Activated CD4-positive, alpha-beta T cell treated with anti-CD3 and anti-CD28 coated beads, Interleukin-2, amount 10 ng/mL, durations not matched to agents 24 days and 14 days (primary cell): ENCODE measurements at regions of chr3 and their contacts with region 1.

Region 1: DNA sequence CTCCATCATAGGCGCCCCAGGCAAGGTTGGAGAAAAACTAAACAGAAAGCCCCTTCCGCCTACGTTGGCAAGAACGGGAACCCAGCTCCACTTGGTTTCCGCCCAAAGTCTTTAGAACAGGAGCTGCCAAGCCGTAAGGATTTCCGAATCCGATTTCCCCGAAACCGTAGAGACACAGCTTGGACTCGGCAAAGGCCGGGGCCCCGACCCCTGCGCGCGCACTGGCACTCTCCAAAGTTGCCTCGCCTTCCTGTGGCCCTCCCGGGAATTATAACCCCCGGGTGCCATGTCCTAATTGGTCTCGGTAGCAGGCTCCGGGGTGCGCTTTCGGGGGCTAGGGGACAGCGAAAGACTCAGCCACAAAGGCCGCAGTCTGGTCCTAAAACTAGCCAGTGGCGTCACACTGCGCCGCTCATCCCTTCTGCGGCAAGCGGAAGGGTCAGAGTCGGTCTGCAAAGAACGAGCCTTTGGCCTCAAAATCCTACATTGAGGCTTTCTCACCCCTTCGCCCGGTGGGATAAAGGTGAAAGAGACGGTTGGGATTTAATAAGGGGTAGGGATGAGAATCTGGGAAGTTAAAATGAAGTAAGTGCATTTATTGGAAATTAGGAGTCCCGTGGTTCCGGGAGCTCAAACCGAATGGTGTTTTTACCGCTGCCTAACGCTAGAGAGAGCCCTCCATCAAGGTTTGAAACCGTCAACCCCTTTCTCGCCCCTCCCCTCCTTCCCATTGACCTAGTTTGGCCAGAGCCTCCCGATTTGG is 6.8 kb downstream of the BCL6 start:
- DNase-seq: peak; percentile 92
- H3K4me3 Mint-ChIP-seq: peak overlapping the region; percentile 98
- H3K27ac Mint-ChIP-seq: peak overlapping the region; percentile 99
- H3K4me1 Mint-ChIP-seq: peaks cover 51% of the 10 kb centered on the region
- H3K27me3 Mint-ChIP-seq: no peaks in the 10 kb centered on the region

Region 2: DNA sequence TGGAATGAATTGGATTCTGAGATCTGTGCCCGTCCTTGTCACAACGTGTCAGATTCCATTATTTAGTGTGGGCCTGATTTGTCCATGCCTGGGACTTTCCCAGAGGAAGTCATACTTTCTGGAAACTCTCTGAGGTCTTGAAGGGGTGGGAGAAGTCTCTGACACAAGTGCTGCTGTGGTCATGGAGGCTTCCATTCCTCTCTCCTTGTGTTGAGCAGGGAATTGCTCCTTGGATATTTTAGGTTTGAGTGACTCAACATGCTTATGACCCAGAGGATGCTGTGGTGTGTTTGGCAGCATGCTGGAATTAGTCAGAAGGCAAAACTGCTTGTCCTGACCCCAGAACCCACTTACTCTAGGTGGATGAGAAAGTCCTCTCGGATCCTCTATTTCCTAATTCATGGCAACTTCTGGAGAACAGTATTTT is 547.6 kb after region 1 on chr3:
- intact Hi-C with region 1: loop called (anchors 1 kb)
- DNase-seq: no peak
- H3K4me3 Mint-ChIP-seq: peak overlapping the region; percentile 4
- H3K27ac Mint-ChIP-seq: peak overlapping the region; percentile 80
- H3K4me1 Mint-ChIP-seq: peaks cover 48% of the 10 kb centered on the region
- H3K27me3 Mint-ChIP-seq: no peaks in the 10 kb centered on the region

Region 3: GRCh38 chr3:188339410-188340295 is 601.1 kb after region 1 on chr3:
- intact Hi-C with region 1: loop called (anchors 1 kb)
- DNase-seq: peak; percentile 81
- H3K4me3 Mint-ChIP-seq: peak overlapping the region; percentile 66
- H3K27ac Mint-ChIP-seq: peak overlapping the region; percentile 93
- H3K4me1 Mint-ChIP-seq: peaks cover 34% of the 10 kb centered on the region
- H3K27me3 Mint-ChIP-seq: peaks cover 6% of the 10 kb centered on the region

Region 4: DNA sequence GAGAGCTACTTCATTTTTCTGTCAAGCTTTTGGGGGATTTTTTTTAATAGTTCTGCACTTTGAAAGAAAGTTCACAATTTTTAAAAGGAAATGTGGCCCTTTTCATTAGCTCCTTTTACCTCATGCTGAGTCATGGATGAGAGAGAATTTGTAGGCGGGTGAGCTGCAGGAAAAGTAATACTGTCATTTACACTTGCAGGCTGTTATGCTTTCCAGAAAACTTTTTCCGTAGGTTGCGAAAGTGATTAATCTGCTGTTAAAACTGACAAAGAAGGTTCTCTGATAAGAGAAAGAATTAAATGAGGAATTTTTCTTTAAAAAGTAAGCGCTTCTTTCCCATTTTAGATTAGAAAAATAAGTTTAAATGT is 845.6 kb after region 1 on chr3:
- intact Hi-C with region 1: loop called (anchors 2 kb)
- DNase-seq: no peak
- H3K4me3 Mint-ChIP-seq: no peak overlapping the region
- H3K27ac Mint-ChIP-seq: no peak overlapping the region
- H3K4me1 Mint-ChIP-seq: peaks cover 14% of the 10 kb centered on the region
- H3K27me3 Mint-ChIP-seq: no peaks in the 10 kb centered on the region

Region 5: DNA sequence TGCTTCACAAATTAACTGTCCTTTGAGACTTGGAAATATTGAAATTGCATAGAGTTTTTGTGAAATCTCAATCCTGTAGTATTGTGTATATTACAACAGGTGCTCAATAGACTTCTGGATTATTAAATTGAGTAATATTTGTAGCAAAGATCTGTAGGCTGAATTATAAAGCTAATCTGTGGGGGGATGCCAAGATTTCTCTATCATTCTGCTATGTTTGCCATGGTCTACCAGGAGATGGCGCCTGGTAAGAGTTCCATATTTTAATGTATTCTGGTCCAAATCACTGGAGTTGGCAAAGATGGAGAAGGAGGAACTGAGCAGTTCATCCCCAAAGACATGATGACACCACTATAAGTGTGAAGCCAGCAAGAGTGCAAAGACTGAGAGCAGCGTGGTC is 1092.4 kb after region 1 on chr3:
- intact Hi-C with region 1: loop called (anchors 5 kb)
- DNase-seq: no peak
- H3K4me3 Mint-ChIP-seq: no peak overlapping the region
- H3K27ac Mint-ChIP-seq: no peak overlapping the region
- H3K4me1 Mint-ChIP-seq: peaks cover 4% of the 10 kb centered on the region
- H3K27me3 Mint-ChIP-seq: no peaks in the 10 kb centered on the region

Region 6: DNA sequence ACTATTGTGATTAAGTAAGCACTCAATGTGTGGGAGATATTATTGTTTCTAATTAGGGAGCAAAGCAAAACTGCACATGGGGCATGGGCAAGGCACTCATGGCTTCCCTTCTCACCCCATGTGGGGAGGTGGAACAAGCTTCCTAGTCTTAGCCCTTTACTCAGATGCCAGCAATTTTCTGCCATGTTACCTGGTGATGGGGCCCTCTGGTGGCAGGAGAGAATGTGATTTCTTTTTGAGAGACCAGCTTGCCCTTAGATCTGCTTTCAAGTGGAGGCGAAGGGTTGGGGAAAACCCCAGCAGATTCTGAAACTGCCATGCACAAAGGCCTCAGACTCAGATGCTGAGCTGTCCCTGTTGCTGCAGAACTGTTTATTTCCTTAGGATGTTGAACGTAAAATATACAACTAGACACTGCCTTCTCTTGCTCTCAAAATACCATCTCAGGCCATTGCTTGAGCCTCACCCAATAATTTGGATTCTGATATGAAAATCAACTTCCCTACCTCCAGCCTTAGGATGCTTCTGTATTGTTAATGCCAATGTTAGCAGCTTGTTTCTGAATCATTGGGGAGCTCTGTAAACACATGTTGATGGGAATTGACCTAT is 1303.1 kb after region 1 on chr3:
- intact Hi-C with region 1: loop called (anchors 1 kb)
- DNase-seq: peak; percentile 94
- H3K4me3 Mint-ChIP-seq: peak overlapping the region; percentile 48
- H3K27ac Mint-ChIP-seq: peak overlapping the region; percentile 79
- H3K4me1 Mint-ChIP-seq: peaks cover 54% of the 10 kb centered on the region
- H3K27me3 Mint-ChIP-seq: no peaks in the 10 kb centered on the region